Dendritic cell treated with granulocyte-macrophage colony-stimulating factor and Interleukin-4, amounts not matched to agents 40 ng/mL and 50 ng/mL, for 4 days (primary cell): ENCODE measurements at regions of chr5 and their contacts with region 1.

Region 1: GRCh38 chr5:134708301-134708700 is 30.0 kb upstream of the CAMLG start:
- H3K4me3 Mint-ChIP-seq: no peak overlapping the region
- H3K27ac Mint-ChIP-seq: no peak overlapping the region
- H3K4me1 Mint-ChIP-seq: no peaks in the 10 kb centered on the region
- H3K27me3 Mint-ChIP-seq: no peaks in the 10 kb centered on the region

Region 2: GRCh38 chr5:134149571-134150303 is 558.6 kb before region 1 on chr5:
- intact Hi-C with region 1: loop called (anchors 10 kb)
- H3K4me3 Mint-ChIP-seq: no peak overlapping the region
- H3K27ac Mint-ChIP-seq: no peak overlapping the region
- H3K4me1 Mint-ChIP-seq: peaks cover 18% of the 10 kb centered on the region
- H3K27me3 Mint-ChIP-seq: no peaks in the 10 kb centered on the region

Region 3: GRCh38 chr5:135466178-135467050 is 758.1 kb after region 1 on chr5:
- intact Hi-C with region 1: no loop called
- H3K4me3 Mint-ChIP-seq: peak overlapping the region; percentile 60
- H3K27ac Mint-ChIP-seq: peak overlapping the region; percentile 42
- H3K4me1 Mint-ChIP-seq: peaks cover 8% of the 10 kb centered on the region
- H3K27me3 Mint-ChIP-seq: peaks cover 70% of the 10 kb centered on the region